ENCODE measurements at regions of chr9 and their contacts with region 1.

Region 1: GRCh38 chr9:5586391-5586802 is 42.5 kb upstream of the RIC1 start:
- DNase-seq: no peak
- H3K4me3 ChIP-seq: no peak overlapping the region
- H3K27ac ChIP-seq: peak overlapping the region in 1 of 2 experiments; percentile 86; a peak in 2 of 4 replicates
- H3K4me1 ChIP-seq: peaks cover 0 to 15% of the 10 kb centered on the region in 2 experiments; a peak in 2 of 4 replicates
- H3K27me3 ChIP-seq: no peaks in the 10 kb centered on the region
- CTCF ChIP-seq: no peak
- EP300 ChIP-seq: no peak
- RAD21 ChIP-seq: no peak

Region 2: GRCh38 chr9:5437254-5438216 is 148.9 kb before region 1 on chr9 and contains the start of gene PLGRKT:
- CTCF ChIA-PET with region 1: interaction called, 12 read pairs
- POLR2A ChIA-PET with region 1: no interaction called
- DNase-seq: peak; percentile 92
- H3K4me3 ChIP-seq: peak within 1 kb of the TSS; percentile 85 to 86
- H3K27ac ChIP-seq: peak within 1 kb of the TSS; percentile 90 to 96
- H3K4me1 ChIP-seq: peaks cover 6 to 15% of the 10 kb centered on the region in 2 experiments
- H3K27me3 ChIP-seq: no peaks in the 10 kb centered on the region
- CTCF ChIP-seq: peak; percentile 36
- EP300 ChIP-seq: 0 out of 4 replicates have a peak, but pooled peaks of 1 of the 2 experiments have one; percentile 23
- RAD21 ChIP-seq: no peak
- polyA plus RNA-seq, gene PLGRKT: 11.4 and 13.1 TPM in 2 replicates

Region 3: DNA sequence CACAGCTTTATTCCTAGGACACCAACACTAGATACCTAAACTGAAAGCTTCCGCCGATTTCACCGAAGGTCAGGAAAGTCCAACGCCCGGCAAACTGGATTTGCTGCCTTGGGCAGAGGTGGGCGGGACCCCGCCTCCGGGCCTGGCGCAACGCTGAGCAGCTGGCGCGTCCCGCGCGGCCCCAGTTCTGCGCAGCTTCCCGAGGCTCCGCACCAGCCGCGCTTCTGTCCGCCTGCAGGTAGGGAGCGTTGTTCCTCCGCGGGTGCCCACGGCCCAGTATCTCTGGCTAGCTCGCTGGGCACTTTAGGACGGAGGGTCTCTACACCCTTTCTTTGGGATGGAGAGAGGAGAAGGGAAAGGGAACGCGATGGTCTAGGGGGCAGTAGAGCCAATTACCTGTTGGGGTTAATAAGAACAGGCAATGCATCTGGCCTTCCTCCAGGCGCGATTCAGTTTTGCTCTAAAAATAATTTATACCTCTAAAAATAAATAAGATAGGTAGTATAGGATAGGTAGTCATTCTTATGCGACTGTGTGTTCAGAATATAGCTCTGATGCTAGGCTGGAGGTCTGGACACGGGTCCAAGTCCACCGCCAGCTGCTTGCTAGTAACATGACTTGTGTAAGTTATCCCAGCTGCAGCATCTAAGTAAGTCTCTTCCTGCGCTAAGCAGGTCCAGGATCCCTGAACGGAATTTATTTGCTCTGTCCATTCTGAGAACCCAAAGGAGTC is 135.9 kb before region 1 on chr9 and contains the start of gene CD274:
- CTCF ChIA-PET with region 1: interaction called, 51 read pairs
- POLR2A ChIA-PET with region 1: no interaction called
- DNase-seq: peak; percentile 82
- H3K4me3 ChIP-seq: peak within 1 kb of the TSS; percentile 64 to 67
- H3K27ac ChIP-seq: peak within 1 kb of the TSS; percentile 67 to 75
- H3K4me1 ChIP-seq: peaks cover 6 to 21% of the 10 kb centered on the region in 2 experiments
- H3K27me3 ChIP-seq: no peaks in the 10 kb centered on the region
- CTCF ChIP-seq: peak; percentile 67
- EP300 ChIP-seq: no peak
- RAD21 ChIP-seq: peak; percentile 76
- polyA plus RNA-seq, gene CD274: 25.8 and 30.9 TPM in 2 replicates

Region 4: GRCh38 chr9:5529683-5530221 is 56.6 kb before region 1 on chr9:
- CTCF ChIA-PET with region 1: no interaction called
- POLR2A ChIA-PET with region 1: no interaction called
- DNase-seq: no peak
- H3K4me3 ChIP-seq: no peak overlapping the region
- H3K27ac ChIP-seq: 0 out of 4 replicates have a peak overlapping the region, but pooled peaks of 1 of the 2 experiments have one; percentile 17
- H3K4me1 ChIP-seq: peaks cover 0 to 6% of the 10 kb centered on the region in 2 experiments; a peak in 2 of 4 replicates
- H3K27me3 ChIP-seq: no peaks in the 10 kb centered on the region
- CTCF ChIP-seq: no peak
- EP300 ChIP-seq: no peak; a peak in 1 of 4 replicates
- RAD21 ChIP-seq: no peak

Region 5: GRCh38 chr9:5575000-5575399 is 11.4 kb before region 1 on chr9:
- CTCF ChIA-PET with region 1: interaction called, 12 read pairs
- POLR2A ChIA-PET with region 1: no interaction called
- DNase-seq: no peak
- H3K4me3 ChIP-seq: no peak overlapping the region
- H3K27ac ChIP-seq: no peak overlapping the region
- H3K4me1 ChIP-seq: peaks cover 0 to 4% of the 10 kb centered on the region in 2 experiments; a peak in 1 of 4 replicates
- H3K27me3 ChIP-seq: no peaks in the 10 kb centered on the region
- CTCF ChIP-seq: 0 out of 2 replicates have a peak, but pooled peaks have one; percentile 16
- EP300 ChIP-seq: no peak
- RAD21 ChIP-seq: no peak

Region 6: GRCh38 chr9:5628530-5629311 is 42.3 kb after region 1 on chr9 and contains the start of gene RIC1:
- CTCF ChIA-PET with region 1: no interaction called
- POLR2A ChIA-PET with region 1: no interaction called
- DNase-seq: peak; percentile 98
- H3K4me3 ChIP-seq: peak within 1 kb of the TSS; percentile 93 to 95
- H3K27ac ChIP-seq: peak within 1 kb of the TSS; percentile 91 to 95
- H3K4me1 ChIP-seq: peaks cover 8 to 15% of the 10 kb centered on the region in 2 experiments; a peak in 3 of 4 replicates
- H3K27me3 ChIP-seq: no peaks in the 10 kb centered on the region
- CTCF ChIP-seq: no peak
- EP300 ChIP-seq: no peak
- RAD21 ChIP-seq: no peak
- polyA plus RNA-seq, gene RIC1: 21.9 and 37.2 TPM in 2 replicates

Region 7: DNA sequence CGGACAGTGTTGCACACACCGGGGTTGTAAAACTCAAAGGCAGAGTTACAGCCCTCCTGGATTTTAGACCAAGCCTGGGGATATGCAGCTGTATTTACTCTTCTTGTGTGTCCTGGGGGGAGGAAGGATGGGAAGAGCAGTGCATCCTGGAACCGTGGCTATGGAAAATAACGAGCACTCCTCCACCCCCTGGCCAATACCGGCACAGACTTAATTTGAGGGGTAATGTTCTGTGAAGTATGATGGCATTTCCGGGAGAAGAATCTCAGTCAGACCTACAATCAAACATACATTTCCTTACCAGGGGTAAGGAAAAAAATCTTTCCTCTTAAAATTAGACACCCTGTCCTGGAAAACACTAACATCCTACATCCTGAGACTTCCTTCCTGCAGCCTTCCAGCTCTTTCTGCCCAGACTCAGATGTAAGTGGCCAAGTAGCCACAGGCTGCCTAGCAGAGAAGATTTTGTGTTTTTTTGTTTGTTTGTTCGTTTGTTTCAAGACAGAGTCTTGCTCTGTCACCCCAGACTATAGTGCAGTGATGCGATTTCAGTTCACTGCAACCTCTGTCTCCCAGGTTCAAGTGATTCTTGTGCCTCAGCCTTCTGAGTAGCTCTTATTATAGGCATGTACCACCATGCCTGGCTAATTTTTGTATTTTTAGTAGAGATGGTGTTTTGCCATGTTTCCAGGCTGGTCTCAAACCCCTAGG is 257.6 kb after region 1 on chr9:
- CTCF ChIA-PET with region 1: no interaction called
- POLR2A ChIA-PET with region 1: no interaction called
- DNase-seq: peak; percentile 26
- H3K4me3 ChIP-seq: no peak overlapping the region
- H3K27ac ChIP-seq: peak overlapping the region in 1 of 2 experiments; percentile 51; a peak in 1 of 4 replicates
- H3K4me1 ChIP-seq: peaks cover 7 to 9% of the 10 kb centered on the region in 2 experiments; a peak in 2 of 4 replicates
- H3K27me3 ChIP-seq: no peaks in the 10 kb centered on the region
- CTCF ChIP-seq: no peak
- EP300 ChIP-seq: no peak
- RAD21 ChIP-seq: no peak

Measured in SK-N-SH (cell line).